CD8-positive, alpha-beta memory T cell (primary cell): ENCODE measurements at regions of chr2 and their contacts with region 1.

Region 1: GRCh38 chr2:235746257-235747084 is 252.6 kb downstream of the AGAP1 start:
- DNase-seq: peak in 4 of 5 donors; percentile 21 to 55 (median 49)
- H3K4me3 ChIP-seq: no peak overlapping the region
- H3K4me3 Mint-ChIP-seq: no peak overlapping the region
- H3K27ac ChIP-seq: no peak overlapping the region
- H3K27ac Mint-ChIP-seq: no peak overlapping the region
- H3K4me1 ChIP-seq: no peaks in the 10 kb centered on the region
- H3K4me1 Mint-ChIP-seq: no peaks in the 10 kb centered on the region
- H3K27me3 ChIP-seq: no peaks in the 10 kb centered on the region
- H3K27me3 Mint-ChIP-seq: peaks cover 6 to 10% of the 10 kb centered on the region in 2 donors

Region 2: GRCh38 chr2:235765181-235765820 is 18.8 kb after region 1 on chr2:
- CTCF ChIA-PET with region 1: interaction called, 13 read pairs
- POLR2A ChIA-PET with region 1: no interaction called
- DNase-seq: no peak
- H3K4me3 ChIP-seq: no peak overlapping the region
- H3K4me3 Mint-ChIP-seq: no peak overlapping the region
- H3K27ac ChIP-seq: no peak overlapping the region
- H3K27ac Mint-ChIP-seq: no peak overlapping the region
- H3K4me1 ChIP-seq: no peaks in the 10 kb centered on the region
- H3K4me1 Mint-ChIP-seq: peaks cover 0 to 4% (median 2%) of the 10 kb centered on the region in 3 donors
- H3K27me3 ChIP-seq: no peaks in the 10 kb centered on the region
- H3K27me3 Mint-ChIP-seq: peaks cover 0 to 7% of the 10 kb centered on the region in 2 donors

Region 3: GRCh38 chr2:236136538-236136937 is 390.1 kb after region 1 on chr2:
- CTCF ChIA-PET with region 1: no interaction called
- POLR2A ChIA-PET with region 1: no interaction called
- DNase-seq: no peak
- H3K4me3 ChIP-seq: no peak overlapping the region
- H3K4me3 Mint-ChIP-seq: no peak overlapping the region
- H3K27ac ChIP-seq: no peak overlapping the region
- H3K27ac Mint-ChIP-seq: no peak overlapping the region
- H3K4me1 ChIP-seq: no peaks in the 10 kb centered on the region
- H3K4me1 Mint-ChIP-seq: no peaks in the 10 kb centered on the region
- H3K27me3 ChIP-seq: no peaks in the 10 kb centered on the region
- H3K27me3 Mint-ChIP-seq: peaks cover 2 to 5% of the 10 kb centered on the region in 2 donors